SK-N-SH (cell line): ENCODE measurements at regions of chr14 and their contacts with region 1.

Region 1: DNA sequence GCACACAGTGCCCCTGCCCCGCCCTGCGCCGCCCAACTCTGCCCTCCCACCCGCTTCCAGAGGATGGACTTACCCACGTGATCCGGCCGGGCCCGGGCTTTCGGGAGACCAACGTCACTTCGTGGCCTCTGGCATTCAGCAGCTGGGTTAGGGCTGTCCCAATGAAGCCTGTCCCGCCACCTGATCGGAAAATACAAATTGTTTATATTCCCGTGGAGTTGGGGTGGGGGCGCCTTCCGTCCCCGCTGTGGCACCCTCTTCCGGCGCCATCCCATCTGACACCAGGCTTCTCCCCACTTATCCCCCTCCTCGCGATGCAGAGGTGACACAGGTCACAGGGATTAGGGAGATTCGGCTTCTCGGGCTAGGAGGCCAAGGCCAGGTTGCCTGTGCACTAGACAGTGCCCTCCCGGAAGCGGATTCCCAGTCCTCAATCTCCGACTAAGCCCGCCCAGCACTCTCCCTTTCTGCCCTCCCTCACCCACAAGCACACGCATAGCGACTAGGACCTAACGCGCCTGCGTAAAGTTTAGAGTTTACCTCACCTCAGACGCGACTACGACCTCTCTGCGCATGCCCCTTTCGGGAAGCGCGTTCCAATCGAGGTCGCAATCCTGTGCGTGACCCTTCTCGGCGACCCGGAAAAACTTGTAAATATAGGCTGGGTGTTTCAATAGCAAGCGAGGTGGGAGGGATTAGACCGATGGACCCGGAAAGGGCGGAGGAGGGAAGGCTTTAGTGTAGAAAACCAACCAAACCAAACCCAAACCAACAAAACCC is at the start of gene SDR39U1:
- DNase-seq: peak; percentile 92
- H3K4me3 ChIP-seq: peak within 1 kb of the TSS; percentile 61 to 75
- H3K27ac ChIP-seq: peak within 1 kb of the TSS; percentile 97 to 98
- H3K4me1 ChIP-seq: peaks cover 0 to 17% of the 10 kb centered on the region in 2 experiments; a peak in 2 of 4 replicates
- H3K27me3 ChIP-seq: no peaks in the 10 kb centered on the region
- CTCF ChIP-seq: no peak
- EP300 ChIP-seq: no peak
- RAD21 ChIP-seq: no peak
- polyA plus RNA-seq, gene SDR39U1: 81.8 and 88.4 TPM in 2 replicates

Region 2: DNA sequence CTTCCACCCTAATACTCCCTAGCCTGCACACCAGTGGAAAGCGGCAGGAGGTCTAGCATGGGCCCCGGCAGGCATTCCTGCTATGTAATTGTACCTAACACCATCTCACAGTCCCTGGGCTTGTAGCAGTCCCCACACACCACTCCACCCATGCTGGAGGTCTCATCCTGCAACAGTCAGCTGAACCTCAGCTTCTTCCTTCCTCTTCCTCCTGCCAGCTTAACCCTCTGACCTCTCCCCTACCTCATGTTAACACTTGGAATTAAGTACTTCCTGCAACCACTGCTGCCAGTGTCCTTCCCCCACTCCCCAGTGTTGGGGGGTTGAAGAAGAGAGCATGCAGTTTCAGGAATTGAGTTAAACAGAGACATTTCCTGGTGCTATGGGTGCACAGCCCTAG is 115.2 kb before region 1 on chr14:
- CTCF ChIA-PET with region 1: interaction called, 445 read pairs
- POLR2A ChIA-PET with region 1: interaction called, 4 read pairs
- DNase-seq: no peak
- H3K4me3 ChIP-seq: no peak overlapping the region
- H3K27ac ChIP-seq: no peak overlapping the region
- H3K4me1 ChIP-seq: peaks cover 0 to 7% of the 10 kb centered on the region in 2 experiments; a peak in 1 of 4 replicates
- H3K27me3 ChIP-seq: no peaks in the 10 kb centered on the region
- CTCF ChIP-seq: no peak
- EP300 ChIP-seq: no peak
- RAD21 ChIP-seq: no peak